ENCODE measurements at regions of chr1 and their contacts with region 1.

Region 1: GRCh38 chr1:16206547-16207317 is 5.7 kb downstream of the ARHGEF19 start:
- DNase-seq: peak; percentile 86 to 96 (median 92)
- ATAC-seq: peak; percentile 91
- H3K4me3 Mint-ChIP-seq: peak overlapping the region; percentile 85 to 97 (median 92)
- H3K27ac Mint-ChIP-seq: peak overlapping the region; percentile 85 to 99 (median 96)
- H3K4me1 Mint-ChIP-seq: peaks cover 4 to 16% (median 12%) of the 10 kb centered on the region in 4 donors
- H3K27me3 Mint-ChIP-seq: no peaks in the 10 kb centered on the region

Region 2: GRCh38 chr1:16146279-16147155 is 60.2 kb before region 1 on chr1:
- POLR2A ChIA-PET with region 1: no interaction called
- DNase-seq: no peak
- ATAC-seq: no peak
- H3K4me3 Mint-ChIP-seq: no peak overlapping the region
- H3K27ac Mint-ChIP-seq: no peak overlapping the region
- H3K4me1 Mint-ChIP-seq: peaks cover 3 to 20% (median 12%) of the 10 kb centered on the region in 4 donors
- H3K27me3 Mint-ChIP-seq: peaks cover 0 to 6% (median 1%) of the 10 kb centered on the region in 5 donors

Region 3: DNA sequence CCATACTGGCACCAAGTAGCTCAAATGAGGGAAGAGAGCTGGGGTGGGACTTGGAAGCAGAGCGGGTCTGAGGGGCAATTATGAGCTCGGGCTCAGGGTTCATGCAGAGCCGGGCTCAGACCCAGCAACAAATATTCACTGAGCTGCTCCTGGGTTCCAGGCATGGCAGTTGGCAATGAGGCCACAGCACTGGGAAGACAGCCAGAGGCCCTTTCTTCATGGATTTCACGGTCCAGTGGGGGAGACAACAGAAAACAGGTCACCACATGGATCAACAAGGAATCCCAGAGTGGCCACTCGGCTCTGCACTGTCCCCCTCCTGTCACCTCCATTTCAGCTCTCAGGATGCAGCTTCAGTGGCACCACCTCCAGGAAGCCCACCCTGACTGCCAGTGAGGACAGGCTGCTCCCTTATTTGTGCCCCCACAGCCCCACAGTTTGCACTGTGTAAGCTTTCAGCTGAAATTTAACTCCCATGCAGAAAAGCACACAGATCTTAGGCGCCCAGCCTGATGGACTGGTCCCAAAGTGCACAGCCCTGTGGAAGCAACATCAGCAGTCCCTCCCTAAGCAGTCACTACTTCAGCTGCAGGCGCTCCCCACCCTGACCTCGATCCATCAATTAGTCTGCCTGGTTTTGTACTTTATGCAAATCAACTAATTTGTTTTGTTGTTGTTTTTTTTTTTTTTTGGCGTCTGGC is 16.7 kb before region 1 on chr1:
- POLR2A ChIA-PET with region 1: no interaction called
- DNase-seq: no peak
- ATAC-seq: no peak
- H3K4me3 Mint-ChIP-seq: no peak overlapping the region
- H3K27ac Mint-ChIP-seq: no peak overlapping the region
- H3K4me1 Mint-ChIP-seq: peaks cover 0 to 6% (median 2%) of the 10 kb centered on the region in 4 donors
- H3K27me3 Mint-ChIP-seq: peaks cover 5 to 18% (median 10%) of the 10 kb centered on the region in 5 donors

Region 4: GRCh38 chr1:16217061-16217785 is 10.5 kb after region 1 on chr1:
- POLR2A ChIA-PET with region 1: interaction called, 28 read pairs
- DNase-seq: peak; percentile 85 to 96 (median 90)
- ATAC-seq: peak; percentile 94 to 95
- H3K4me3 Mint-ChIP-seq: peak overlapping the region; percentile 82 to 91 (median 87)
- H3K27ac Mint-ChIP-seq: peak overlapping the region; percentile 31 to 90 (median 67)
- H3K4me1 Mint-ChIP-seq: peaks cover 17 to 38% (median 24%) of the 10 kb centered on the region in 4 donors
- H3K27me3 Mint-ChIP-seq: peaks cover 0 to 2% (median 0%) of the 10 kb centered on the region in 5 donors

Region 5: GRCh38 chr1:16236511-16237342 is 30.0 kb after region 1 on chr1 and contains the start of gene CPLANE2:
- POLR2A ChIA-PET with region 1: interaction called, 18 read pairs
- DNase-seq: peak; percentile 92 to 97 (median 95)
- ATAC-seq: peak; percentile 79 to 83
- H3K4me3 Mint-ChIP-seq: peak within 1 kb of the TSS; percentile 90 to 95 (median 92)
- H3K27ac Mint-ChIP-seq: peak within 1 kb of the TSS; percentile 86 to 99 (median 96)
- H3K4me1 Mint-ChIP-seq: peaks cover 9 to 28% (median 20%) of the 10 kb centered on the region in 4 donors
- H3K27me3 Mint-ChIP-seq: no peaks in the 10 kb centered on the region
- polyA plus RNA-seq, gene CPLANE2: 1.7 to 2.9 (median 2.7) TPM

Measured in naive thymus-derived CD8-positive, alpha-beta T cell (primary cell).